Calu3 (cell line): ENCODE measurements at regions of chr3 and their contacts with region 1.

Region 1: GRCh38 chr3:168095611-168096209 is at the start of gene GOLIM4:
- DNase-seq: peak; percentile 99
- H3K4me3 Mint-ChIP-seq: peak within 1 kb of the TSS; percentile 99
- H3K27ac Mint-ChIP-seq: peak within 1 kb of the TSS; percentile 95
- H3K4me1 Mint-ChIP-seq: peaks cover 32% of the 10 kb centered on the region
- H3K27me3 Mint-ChIP-seq: no peaks in the 10 kb centered on the region
- CTCF ChIP-seq: no peak
- total RNA-seq, gene GOLIM4: 46.5 and 53.8 TPM in 2 replicates

Region 2: GRCh38 chr3:167734498-167735232 is 361.0 kb before region 1 on chr3 and contains the start of gene PDCD10:
- CTCF ChIA-PET with region 1: no interaction called
- intact Hi-C with region 1: loop called (anchors 10 kb)
- DNase-seq: peak; percentile 99
- H3K4me3 Mint-ChIP-seq: no peak within 1 kb of the TSS
- H3K27ac Mint-ChIP-seq: no peak within 1 kb of the TSS
- H3K4me1 Mint-ChIP-seq: peaks cover 27% of the 10 kb centered on the region
- H3K27me3 Mint-ChIP-seq: no peaks in the 10 kb centered on the region
- CTCF ChIP-seq: no peak
- total RNA-seq, gene PDCD10: 117 and 120 TPM in 2 replicates

Region 3: DNA sequence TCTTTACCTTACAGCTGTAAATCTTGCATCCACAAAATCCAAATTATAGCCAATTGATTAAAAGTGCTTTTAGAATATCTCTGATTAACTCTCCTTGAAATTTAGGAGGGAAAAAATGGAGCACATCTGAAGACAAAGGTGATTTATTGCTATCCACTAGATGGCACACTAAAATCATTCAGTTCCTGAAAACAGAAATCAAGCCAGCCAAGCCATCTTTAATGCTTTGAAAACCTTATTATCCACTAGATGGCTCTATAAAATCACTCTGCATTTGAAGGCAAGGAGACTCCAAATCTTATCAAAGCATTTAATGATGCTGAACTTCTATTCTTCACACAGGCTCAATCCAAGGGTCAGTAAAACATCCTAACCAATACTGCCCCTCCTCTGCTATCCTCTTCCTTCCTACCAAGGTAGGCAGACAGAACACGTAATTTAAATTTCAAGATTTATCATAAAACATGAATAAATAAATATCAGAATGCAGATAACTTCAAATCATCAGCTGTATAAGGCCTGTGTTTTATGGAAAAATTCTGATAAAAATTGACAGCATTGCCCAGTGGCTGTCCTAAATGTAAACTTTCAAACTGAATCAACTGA is 48.4 kb before region 1 on chr3:
- CTCF ChIA-PET with region 1: interaction called, 9 read pairs
- intact Hi-C with region 1: loop called (anchors 2 kb)
- DNase-seq: peak; percentile 36
- H3K4me3 Mint-ChIP-seq: no peak overlapping the region
- H3K27ac Mint-ChIP-seq: no peak overlapping the region
- H3K4me1 Mint-ChIP-seq: no peaks in the 10 kb centered on the region
- H3K27me3 Mint-ChIP-seq: no peaks in the 10 kb centered on the region
- CTCF ChIP-seq: peak; percentile 81

Region 4: GRCh38 chr3:168062679-168063078 is 33.0 kb before region 1 on chr3:
- CTCF ChIA-PET with region 1: interaction called, 5 read pairs
- intact Hi-C with region 1: loop called (anchors 2 kb)
- DNase-seq: peak; percentile 19
- H3K4me3 Mint-ChIP-seq: peak overlapping the region; percentile 19
- H3K27ac Mint-ChIP-seq: peak overlapping the region; percentile 61
- H3K4me1 Mint-ChIP-seq: peaks cover 55% of the 10 kb centered on the region
- H3K27me3 Mint-ChIP-seq: no peaks in the 10 kb centered on the region
- CTCF ChIP-seq: no peak

Region 5: GRCh38 chr3:168068346-168068745 is 27.4 kb before region 1 on chr3:
- CTCF ChIA-PET with region 1: interaction called, 5 read pairs
- intact Hi-C with region 1: loop called (anchors 2 kb)
- DNase-seq: no peak
- H3K4me3 Mint-ChIP-seq: no peak overlapping the region
- H3K27ac Mint-ChIP-seq: no peak overlapping the region
- H3K4me1 Mint-ChIP-seq: peaks cover 47% of the 10 kb centered on the region
- H3K27me3 Mint-ChIP-seq: no peaks in the 10 kb centered on the region
- CTCF ChIP-seq: no peak

Region 6: DNA sequence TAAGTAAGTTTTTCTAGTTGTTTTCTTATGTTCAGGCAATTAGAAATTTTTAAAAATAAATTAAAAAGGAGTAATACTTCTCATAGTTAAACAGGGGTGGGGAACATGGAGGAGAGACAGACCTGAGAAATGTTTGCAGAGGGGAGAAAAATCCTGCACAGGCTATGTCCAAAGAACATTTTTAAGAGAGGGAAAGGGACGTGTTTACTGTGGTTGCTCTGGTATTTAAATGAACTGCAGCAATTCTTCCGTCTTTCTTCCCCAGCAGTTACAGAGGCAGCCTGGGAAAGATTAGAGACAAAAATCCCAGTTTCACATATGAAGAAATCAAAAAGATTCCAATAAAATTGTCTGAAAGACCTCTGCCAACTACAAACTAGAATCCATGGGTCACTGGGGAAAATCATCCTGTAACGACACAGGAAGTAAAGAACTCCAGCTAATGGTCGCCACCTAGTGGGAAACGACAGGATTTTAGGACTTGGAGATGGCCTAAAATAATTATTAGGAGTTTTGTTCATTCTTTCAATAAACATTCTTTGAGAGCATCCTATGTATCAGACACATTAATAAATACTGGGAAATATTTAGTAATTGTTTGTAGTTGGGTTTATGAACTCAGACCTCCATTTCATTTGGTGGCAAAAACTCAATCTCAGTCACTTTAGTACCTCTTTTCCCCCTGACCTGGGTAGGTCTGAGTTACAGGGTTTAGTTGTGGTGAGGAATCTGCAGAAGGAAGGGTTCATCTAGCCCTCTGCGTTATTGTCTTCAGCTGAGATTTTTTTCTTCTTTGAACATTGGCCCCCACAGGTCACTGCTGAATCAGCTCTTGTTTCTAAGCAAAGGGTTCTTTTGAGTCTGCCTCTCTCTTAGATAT is 69.9 kb after region 1 on chr3:
- CTCF ChIA-PET with region 1: interaction called, 5 read pairs
- intact Hi-C with region 1: loop called (anchors 2 kb)
- DNase-seq: peak; percentile 73
- H3K4me3 Mint-ChIP-seq: no peak overlapping the region
- H3K27ac Mint-ChIP-seq: no peak overlapping the region
- H3K4me1 Mint-ChIP-seq: no peaks in the 10 kb centered on the region
- H3K27me3 Mint-ChIP-seq: no peaks in the 10 kb centered on the region
- CTCF ChIP-seq: peak; percentile 86